ENCODE measurements at regions of chr1 and their contacts with region 1.

Region 1: GRCh38 chr1:78348496-78349284 is 142.1 kb upstream of the PTGFR start:
- DNase-seq: no peak
- H3K4me3 ChIP-seq: no peak overlapping the region
- H3K27ac ChIP-seq: no peak overlapping the region
- H3K4me1 ChIP-seq: no peaks in the 10 kb centered on the region
- H3K27me3 ChIP-seq: peaks cover 0 to 6% of the 10 kb centered on the region in 2 experiments
- CTCF ChIP-seq: no peak
- POLR2A ChIP-seq: no peak

Region 2: GRCh38 chr1:78333502-78333901 is 15.2 kb before region 1 on chr1:
- CTCF ChIA-PET with region 1: interaction called, 11 read pairs
- POLR2A ChIA-PET with region 1: no interaction called
- dilution Hi-C with region 1: no loop called
- intact Hi-C with region 1: no loop called
- DNase-seq: peak; percentile 25
- H3K4me3 ChIP-seq: no peak overlapping the region
- H3K27ac ChIP-seq: no peak overlapping the region
- H3K4me1 ChIP-seq: no peaks in the 10 kb centered on the region
- H3K27me3 ChIP-seq: no peaks in the 10 kb centered on the region
- CTCF ChIP-seq: peak; percentile 61 to 68
- POLR2A ChIP-seq: no peak

Region 3: DNA sequence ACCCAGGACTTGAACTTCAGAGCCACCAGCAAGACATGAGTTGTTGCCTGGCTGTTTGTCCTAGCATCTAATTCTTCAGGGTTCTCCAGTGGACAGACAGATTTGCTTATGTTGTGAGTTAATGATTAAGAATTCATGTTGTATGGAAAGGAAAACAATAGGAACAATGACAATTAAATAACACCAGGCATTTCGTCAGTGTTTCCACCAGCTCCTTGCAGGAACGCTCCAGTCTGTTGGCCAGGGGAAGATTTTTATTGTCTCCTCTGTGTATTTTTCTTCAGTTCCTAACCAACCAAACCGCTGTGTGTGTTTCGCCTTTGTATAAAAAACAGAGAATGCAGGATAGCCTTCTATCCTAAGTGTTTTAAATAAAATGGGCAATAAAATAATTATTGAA is 77.7 kb after region 1 on chr1:
- CTCF ChIA-PET with region 1: no interaction called
- POLR2A ChIA-PET with region 1: no interaction called
- dilution Hi-C with region 1: no loop called
- intact Hi-C with region 1: no loop called
- DNase-seq: no peak
- H3K4me3 ChIP-seq: no peak overlapping the region
- H3K27ac ChIP-seq: no peak overlapping the region
- H3K4me1 ChIP-seq: no peaks in the 10 kb centered on the region
- H3K27me3 ChIP-seq: peaks cover 0 to 15% of the 10 kb centered on the region in 2 experiments
- CTCF ChIP-seq: no peak
- POLR2A ChIP-seq: no peak